Activated CD8-positive, alpha-beta T cell treated with anti-CD3 and anti-CD28 coated beads for 36 hours (primary cell): ENCODE measurements at regions of chr11 and their contacts with region 1.

Region 1: DNA sequence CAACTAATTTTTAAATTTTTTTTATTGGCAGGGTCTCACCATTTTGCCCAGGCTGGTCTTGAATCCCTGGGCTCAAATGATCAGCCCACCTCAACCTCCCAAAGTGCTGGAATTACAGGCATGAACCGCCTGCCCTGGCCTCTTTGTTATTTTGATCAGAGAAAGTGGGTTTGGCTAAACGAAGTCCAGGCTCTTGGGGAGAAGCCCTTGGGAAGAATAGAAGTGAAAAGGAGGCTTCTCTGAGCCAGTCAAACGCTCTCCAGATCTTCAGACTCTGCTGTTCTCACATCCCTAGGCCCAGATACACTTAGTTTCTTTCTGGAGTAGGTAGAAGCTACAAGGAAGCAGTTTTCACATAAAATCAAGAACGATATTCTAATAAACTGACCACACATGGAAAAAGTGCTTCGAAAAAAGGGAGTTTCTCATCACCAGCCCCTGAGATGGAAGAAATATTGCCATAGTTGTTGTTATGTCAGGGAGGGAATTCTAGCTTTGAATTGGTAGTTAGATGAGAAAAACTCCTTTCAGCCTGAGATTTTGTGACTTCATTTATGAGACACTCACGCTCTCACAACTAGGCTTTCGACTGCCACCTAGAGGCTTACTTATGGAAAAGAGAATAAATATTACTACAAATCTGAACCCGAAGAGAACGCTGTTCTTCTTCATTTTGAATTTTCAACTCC is 41.7 kb upstream of the AQP11 start:
- DNase-seq: peak; percentile 51
- ATAC-seq: no peak
- H3K4me3 Mint-ChIP-seq: no peak overlapping the region
- H3K27ac Mint-ChIP-seq: no peak overlapping the region
- H3K4me1 Mint-ChIP-seq: peaks cover 4% of the 10 kb centered on the region
- H3K27me3 Mint-ChIP-seq: no peaks in the 10 kb centered on the region
- CTCF ChIP-seq: peak; percentile 72

Region 2: DNA sequence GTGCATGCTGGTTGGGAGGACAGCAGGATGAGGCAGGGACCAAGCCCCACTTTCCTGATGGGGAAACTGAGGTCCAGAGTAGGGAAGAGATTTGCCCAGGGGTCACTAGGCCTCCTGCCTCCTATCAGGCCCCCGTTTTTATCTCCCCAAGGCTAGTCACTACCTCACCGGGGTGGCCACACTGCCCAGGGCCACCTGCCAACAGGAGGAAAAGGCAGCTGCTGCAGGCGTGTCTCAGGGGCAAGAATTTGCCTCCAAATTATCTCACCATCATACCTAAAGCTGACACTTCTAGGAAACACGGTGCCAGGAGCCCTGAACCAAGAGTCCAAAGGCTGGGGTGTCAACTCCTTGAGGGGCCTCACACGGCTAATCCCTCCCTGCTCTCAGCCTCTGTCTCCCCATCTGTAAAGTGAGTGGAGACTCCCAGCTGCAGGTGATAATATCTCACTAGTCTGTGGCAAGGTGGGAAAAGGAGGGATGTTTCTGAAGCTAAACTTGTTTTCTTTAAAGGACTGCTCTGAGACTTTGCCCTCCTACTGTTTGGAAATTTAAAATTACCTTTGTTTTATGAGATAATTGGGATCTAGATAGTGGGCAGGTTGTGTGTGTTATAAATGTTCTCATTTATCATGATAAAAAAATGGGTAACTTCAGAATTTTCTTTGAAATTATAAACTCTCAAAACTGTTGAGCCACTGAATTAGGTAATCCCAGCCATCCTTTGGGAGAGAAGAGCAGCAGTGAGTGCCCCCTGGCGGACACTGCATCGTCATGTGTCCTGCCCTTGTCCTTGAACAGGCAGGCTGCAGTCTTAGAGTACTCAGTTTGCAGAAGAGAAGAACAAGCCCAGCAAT is 360.0 kb before region 1 on chr11:
- CTCF ChIA-PET with region 1: interaction called, 23 read pairs
- POLR2A ChIA-PET with region 1: no interaction called
- intact Hi-C with region 1: loop called (anchors 5 kb)
- DNase-seq: peak; percentile 89
- ATAC-seq: peak; percentile 77
- H3K4me3 Mint-ChIP-seq: no peak overlapping the region
- H3K27ac Mint-ChIP-seq: no peak overlapping the region
- H3K4me1 Mint-ChIP-seq: no peaks in the 10 kb centered on the region
- H3K27me3 Mint-ChIP-seq: no peaks in the 10 kb centered on the region
- CTCF ChIP-seq: peak; percentile 86

Region 3: GRCh38 chr11:77198440-77198849 is 349.6 kb before region 1 on chr11:
- CTCF ChIA-PET with region 1: interaction called, 13 read pairs
- POLR2A ChIA-PET with region 1: no interaction called
- intact Hi-C with region 1: loop called (anchors 5 kb)
- DNase-seq: peak; percentile 64
- ATAC-seq: peak; percentile 77
- H3K4me3 Mint-ChIP-seq: no peak overlapping the region
- H3K27ac Mint-ChIP-seq: no peak overlapping the region
- H3K4me1 Mint-ChIP-seq: no peaks in the 10 kb centered on the region
- H3K27me3 Mint-ChIP-seq: no peaks in the 10 kb centered on the region
- CTCF ChIP-seq: no peak

Region 4: GRCh38 chr11:77669848-77670511 is 122.0 kb after region 1 on chr11:
- CTCF ChIA-PET with region 1: no interaction called
- POLR2A ChIA-PET with region 1: no interaction called
- intact Hi-C with region 1: no loop called
- DNase-seq: no peak
- ATAC-seq: no peak
- H3K4me3 Mint-ChIP-seq: no peak overlapping the region
- H3K27ac Mint-ChIP-seq: peak overlapping the region; percentile 53
- H3K4me1 Mint-ChIP-seq: no peaks in the 10 kb centered on the region
- H3K27me3 Mint-ChIP-seq: no peaks in the 10 kb centered on the region
- CTCF ChIP-seq: no peak

Region 5: GRCh38 chr11:77725433-77725832 is 177.4 kb after region 1 on chr11:
- CTCF ChIA-PET with region 1: no interaction called
- POLR2A ChIA-PET with region 1: no interaction called
- intact Hi-C with region 1: no loop called
- DNase-seq: no peak
- ATAC-seq: no peak
- H3K4me3 Mint-ChIP-seq: no peak overlapping the region
- H3K27ac Mint-ChIP-seq: no peak overlapping the region
- H3K4me1 Mint-ChIP-seq: peaks cover 7% of the 10 kb centered on the region
- H3K27me3 Mint-ChIP-seq: no peaks in the 10 kb centered on the region
- CTCF ChIP-seq: no peak